ENCODE measurements at regions of chr5 and their contacts with region 1.

Region 1: GRCh38 chr5:135398853-135399523 is at the start of gene MACROH2A1:
- DNase-seq: peak; percentile 83
- H3K4me3 ChIP-seq: peak within 1 kb of the TSS; percentile 53 to 92 (median 88)
- H3K27ac ChIP-seq: peak within 1 kb of the TSS; percentile 76
- H3K4me1 ChIP-seq: peaks cover 13% of the 10 kb centered on the region
- H3K27me3 ChIP-seq: peaks cover 0 to 1% of the 10 kb centered on the region in 2 experiments
- CTCF ChIP-seq: no peak
- POLR2A ChIP-seq: peak; percentile 88
- total RNA-seq, gene MACROH2A1: 142 and 147 TPM in 2 replicates

Region 2: DNA sequence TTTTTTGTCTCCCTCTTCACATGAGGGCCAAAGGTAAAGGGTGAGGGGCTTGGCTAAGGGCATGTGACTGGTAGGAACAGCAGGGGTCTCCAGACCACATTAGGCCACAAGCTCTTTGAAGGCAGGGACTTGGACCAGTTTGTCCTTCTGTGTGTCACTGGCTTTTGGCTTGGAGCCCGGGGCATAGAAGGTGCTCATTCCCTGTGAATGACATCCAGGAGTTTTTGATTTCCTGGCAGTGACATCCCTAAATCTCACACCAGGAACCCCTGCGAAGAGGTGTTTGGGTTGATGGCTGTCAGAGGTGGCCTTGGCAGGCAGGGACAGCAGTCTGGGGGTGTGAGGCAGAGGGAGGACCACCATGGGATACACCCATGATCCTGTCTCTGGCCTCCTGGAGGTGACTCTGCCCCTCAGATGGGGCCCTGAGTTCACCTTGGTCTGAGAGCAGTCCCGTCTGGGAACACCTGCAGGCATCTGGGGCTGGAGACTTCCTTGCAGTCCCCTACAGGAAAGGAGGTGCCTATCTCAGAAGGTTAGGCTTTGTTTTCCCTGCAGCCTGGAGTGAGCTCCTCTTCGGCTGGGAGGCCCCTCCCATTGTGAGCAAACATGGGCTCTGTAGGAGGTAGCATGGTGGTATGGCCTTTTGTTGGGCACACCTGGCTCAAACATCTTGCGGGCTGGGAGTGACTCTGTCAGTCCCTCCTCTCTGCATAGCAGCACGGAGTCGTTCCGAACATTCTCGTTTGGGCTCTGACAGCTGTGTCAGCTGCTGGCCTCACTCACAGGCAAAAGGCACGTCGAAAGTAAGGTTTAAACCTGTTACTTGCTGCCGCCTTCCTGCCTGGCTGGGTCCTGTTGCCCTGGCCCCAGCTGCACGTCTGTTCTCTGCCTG is 326.4 kb before region 1 on chr5:
- CTCF ChIA-PET with region 1: no interaction called
- POLR2A ChIA-PET with region 1: interaction called, 14 read pairs
- dilution Hi-C with region 1: no loop called
- intact Hi-C with region 1: no loop called
- DNase-seq: no peak
- H3K4me3 ChIP-seq: no peak overlapping the region
- H3K27ac ChIP-seq: no peak overlapping the region
- H3K4me1 ChIP-seq: no peaks in the 10 kb centered on the region
- H3K27me3 ChIP-seq: peaks cover 0 to 2% of the 10 kb centered on the region in 2 experiments
- CTCF ChIP-seq: no peak
- POLR2A ChIP-seq: no peak

Region 3: DNA sequence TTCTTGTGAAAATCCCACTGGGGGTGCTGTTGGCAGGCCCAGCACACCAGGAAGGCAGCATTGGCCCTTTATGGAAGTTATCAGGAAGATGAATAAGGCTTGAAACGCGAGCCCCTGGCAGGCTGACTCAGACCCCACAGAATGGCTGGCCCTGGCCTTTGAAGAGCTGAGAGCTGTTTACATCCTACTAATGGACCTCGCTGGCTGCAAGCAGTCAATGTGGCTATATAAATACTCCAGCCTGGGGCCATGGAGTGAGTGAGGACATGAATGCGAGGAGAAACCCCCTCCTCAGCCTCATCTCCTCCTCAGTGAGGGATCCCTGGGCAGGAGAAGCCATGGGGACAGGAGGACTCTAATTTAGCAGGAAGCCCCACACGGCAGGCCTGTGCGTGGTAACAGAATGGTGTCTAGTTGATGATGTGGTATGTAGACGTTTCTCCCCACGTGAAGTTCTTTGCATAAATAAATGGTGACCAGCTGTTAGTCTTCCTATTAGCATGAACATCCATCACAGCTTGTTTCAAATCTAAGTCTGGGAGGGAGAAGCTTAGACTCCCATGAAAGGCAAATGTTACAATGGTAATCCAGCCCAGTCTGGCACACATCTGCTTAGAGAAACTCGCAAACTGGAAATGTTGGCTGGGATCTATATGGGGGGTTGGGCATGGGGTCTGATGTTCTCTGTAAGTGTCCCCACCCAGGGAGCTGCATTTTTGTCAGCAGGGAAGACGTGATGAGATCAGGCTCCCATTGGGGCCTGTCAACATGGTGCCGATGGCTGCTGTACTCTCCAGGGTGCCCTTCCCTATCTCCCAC is 189.9 kb before region 1 on chr5:
- CTCF ChIA-PET with region 1: no interaction called
- POLR2A ChIA-PET with region 1: no interaction called
- dilution Hi-C with region 1: no loop called
- intact Hi-C with region 1: loop called (anchors 5 kb)
- DNase-seq: peak; percentile 97
- H3K4me3 ChIP-seq: no peak overlapping the region
- H3K27ac ChIP-seq: peak overlapping the region; percentile 59
- H3K4me1 ChIP-seq: peaks cover 22% of the 10 kb centered on the region
- H3K27me3 ChIP-seq: no peaks in the 10 kb centered on the region
- CTCF ChIP-seq: peak; percentile 43 to 46
- POLR2A ChIP-seq: no peak

Region 4: DNA sequence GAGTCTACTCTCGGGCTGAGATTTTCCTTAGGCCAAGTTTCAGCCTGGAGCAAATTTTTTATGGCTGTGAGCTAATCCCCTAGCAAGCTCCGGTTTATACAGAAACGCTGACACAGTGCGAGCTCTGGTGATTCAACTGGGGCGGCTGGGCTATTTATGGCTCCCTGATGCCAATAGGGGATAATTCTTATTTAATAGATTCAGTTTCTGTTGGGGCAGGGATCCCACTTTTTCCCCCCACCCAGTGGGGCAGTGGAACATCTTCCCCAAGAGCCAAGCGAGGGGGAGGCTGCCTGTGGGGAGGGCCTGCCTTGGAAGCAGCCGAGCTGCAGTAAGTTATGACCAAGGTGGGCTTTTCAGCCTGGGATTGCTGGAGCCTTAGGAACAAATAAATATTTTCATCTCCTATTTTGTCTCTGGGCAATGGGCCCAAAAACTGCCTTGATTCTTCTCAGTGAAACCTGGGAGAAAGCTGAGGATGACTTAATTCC is 129.0 kb before region 1 on chr5:
- CTCF ChIA-PET with region 1: no interaction called
- POLR2A ChIA-PET with region 1: no interaction called
- dilution Hi-C with region 1: no loop called
- intact Hi-C with region 1: loop called (anchors 5 kb)
- DNase-seq: no peak
- H3K4me3 ChIP-seq: no peak overlapping the region
- H3K27ac ChIP-seq: peak overlapping the region; percentile 75
- H3K4me1 ChIP-seq: peaks cover 14% of the 10 kb centered on the region
- H3K27me3 ChIP-seq: no peaks in the 10 kb centered on the region
- CTCF ChIP-seq: no peak
- POLR2A ChIP-seq: no peak

Region 5: DNA sequence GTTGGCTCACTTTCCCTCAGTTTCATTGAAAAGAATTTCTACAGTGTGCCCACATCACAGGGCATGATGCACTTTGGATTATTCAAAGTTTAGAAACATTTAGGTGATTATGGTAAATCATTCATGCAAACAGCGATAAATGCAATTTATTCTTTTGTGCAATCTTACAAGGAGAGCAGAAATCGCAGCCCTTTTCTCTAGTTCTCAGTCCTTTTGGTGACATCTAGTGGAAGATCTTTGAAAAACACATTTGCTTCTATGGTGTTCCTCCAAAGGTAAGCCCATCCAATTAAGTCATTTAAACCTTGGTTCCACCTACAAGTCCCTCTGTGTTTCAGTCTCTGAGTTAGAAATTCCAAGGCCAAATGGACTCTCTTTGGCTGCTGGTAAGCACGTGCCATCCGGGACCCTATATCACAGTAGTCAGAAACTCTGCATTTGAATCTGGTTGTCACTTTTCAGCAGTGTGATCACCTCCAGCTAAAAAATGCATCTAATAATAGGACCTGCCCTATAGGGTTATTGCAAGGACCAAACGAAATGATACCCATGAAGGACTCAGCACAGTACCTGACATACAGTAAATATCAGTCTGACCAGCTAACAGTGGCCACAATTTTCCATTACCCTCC is 66.4 kb before region 1 on chr5:
- CTCF ChIA-PET with region 1: no interaction called
- POLR2A ChIA-PET with region 1: no interaction called
- dilution Hi-C with region 1: no loop called
- intact Hi-C with region 1: no loop called
- DNase-seq: peak; percentile 73
- H3K4me3 ChIP-seq: no peak overlapping the region
- H3K27ac ChIP-seq: no peak overlapping the region
- H3K4me1 ChIP-seq: no peaks in the 10 kb centered on the region
- H3K27me3 ChIP-seq: no peaks in the 10 kb centered on the region
- CTCF ChIP-seq: peak; percentile 33 to 47
- POLR2A ChIP-seq: no peak

Region 6: DNA sequence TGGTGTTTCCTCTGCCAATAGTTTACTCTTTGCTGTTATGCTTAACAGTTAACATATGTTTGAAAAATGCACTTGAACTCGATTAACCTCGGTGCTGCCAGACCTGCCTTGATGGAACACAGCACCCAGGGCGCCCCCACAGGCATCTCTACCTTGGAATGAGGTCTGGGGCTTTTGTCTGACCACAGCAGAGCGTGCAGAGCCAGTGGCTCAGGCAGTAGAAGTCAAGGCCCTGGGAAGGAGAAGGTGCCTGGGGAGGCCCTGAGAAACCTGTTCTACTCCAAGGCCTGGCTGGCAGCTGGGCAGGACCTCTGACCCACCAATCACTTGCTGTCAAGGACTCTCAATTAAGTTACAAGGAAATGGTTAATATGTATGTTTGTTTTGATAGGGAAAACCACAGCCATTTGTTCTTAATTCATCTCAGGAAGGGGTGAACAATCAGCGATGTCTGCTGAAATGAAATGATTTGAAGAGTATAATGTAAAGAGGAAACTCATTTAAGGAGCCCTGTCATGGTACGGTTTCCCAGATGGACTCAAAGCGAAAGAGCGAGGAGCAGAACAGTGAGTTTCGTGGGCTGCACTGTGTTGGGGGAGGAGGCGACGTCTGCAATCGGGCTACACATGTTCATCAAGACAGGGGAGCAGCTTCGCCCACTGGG is 21.9 kb before region 1 on chr5:
- CTCF ChIA-PET with region 1: interaction called, 3 read pairs
- POLR2A ChIA-PET with region 1: no interaction called
- dilution Hi-C with region 1: no loop called
- intact Hi-C with region 1: loop called (anchors 1 kb)
- DNase-seq: peak; percentile 66
- H3K4me3 ChIP-seq: no peak overlapping the region
- H3K27ac ChIP-seq: no peak overlapping the region
- H3K4me1 ChIP-seq: peaks cover 21% of the 10 kb centered on the region
- H3K27me3 ChIP-seq: no peaks in the 10 kb centered on the region
- CTCF ChIP-seq: no peak
- POLR2A ChIP-seq: no peak

Region 7: GRCh38 chr5:135386886-135387628 is 11.9 kb before region 1 on chr5:
- CTCF ChIA-PET with region 1: interaction called, 4 read pairs
- POLR2A ChIA-PET with region 1: no interaction called
- dilution Hi-C with region 1: no loop called
- intact Hi-C with region 1: loop called (anchors 1 kb)
- DNase-seq: peak; percentile 55
- H3K4me3 ChIP-seq: no peak overlapping the region
- H3K27ac ChIP-seq: peak overlapping the region; percentile 72
- H3K4me1 ChIP-seq: peaks cover 21% of the 10 kb centered on the region
- H3K27me3 ChIP-seq: no peaks in the 10 kb centered on the region
- CTCF ChIP-seq: no peak
- POLR2A ChIP-seq: no peak

Region 8: GRCh38 chr5:135880278-135880677 is 481.3 kb after region 1 on chr5:
- CTCF ChIA-PET with region 1: no interaction called
- POLR2A ChIA-PET with region 1: no interaction called
- dilution Hi-C with region 1: no loop called
- intact Hi-C with region 1: no loop called
- DNase-seq: peak; percentile 3
- H3K4me3 ChIP-seq: no peak overlapping the region
- H3K27ac ChIP-seq: no peak overlapping the region
- H3K4me1 ChIP-seq: no peaks in the 10 kb centered on the region
- H3K27me3 ChIP-seq: peaks cover 0 to 5% of the 10 kb centered on the region in 2 experiments
- CTCF ChIP-seq: peak in 1 of 2 donors; percentile 27
- POLR2A ChIP-seq: no peak

Measured in endothelial cell of umbilical vein (primary cell).